Mammary epithelial cell (primary cell): ENCODE measurements at regions of chr3 and their contacts with region 1.

Region 1: DNA sequence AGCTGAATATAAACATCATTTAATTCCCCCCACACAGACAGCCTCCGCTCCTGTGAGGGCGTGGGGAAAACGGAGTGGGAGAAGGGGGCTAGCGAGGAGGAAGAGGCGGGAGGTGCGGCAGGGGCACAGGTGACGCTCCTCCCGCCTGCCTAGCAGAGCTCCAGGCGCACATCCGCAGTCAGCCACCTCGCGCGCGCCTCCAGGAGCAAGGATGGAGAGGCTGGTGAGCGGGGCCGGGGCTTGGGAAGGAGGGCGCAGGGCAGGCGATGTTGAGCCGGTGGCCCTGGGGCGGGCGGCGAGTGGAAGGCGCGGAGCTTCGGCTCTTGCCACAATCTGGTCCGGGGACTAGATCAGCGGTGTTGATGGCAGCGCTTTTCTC is at the start of gene CD200:
- DNase-seq: peak; percentile 63
- H3K4me3 ChIP-seq: peak within 1 kb of the TSS; percentile 63 to 69 (median 67)
- H3K27ac ChIP-seq: peak within 1 kb of the TSS; percentile 6
- H3K4me1 ChIP-seq: peaks cover 2% of the 10 kb centered on the region
- H3K27me3 ChIP-seq: no peaks in the 10 kb centered on the region
- CTCF ChIP-seq: no peak
- total RNA-seq, gene CD200: 13.0 to 23.7 TPM

Region 2: DNA sequence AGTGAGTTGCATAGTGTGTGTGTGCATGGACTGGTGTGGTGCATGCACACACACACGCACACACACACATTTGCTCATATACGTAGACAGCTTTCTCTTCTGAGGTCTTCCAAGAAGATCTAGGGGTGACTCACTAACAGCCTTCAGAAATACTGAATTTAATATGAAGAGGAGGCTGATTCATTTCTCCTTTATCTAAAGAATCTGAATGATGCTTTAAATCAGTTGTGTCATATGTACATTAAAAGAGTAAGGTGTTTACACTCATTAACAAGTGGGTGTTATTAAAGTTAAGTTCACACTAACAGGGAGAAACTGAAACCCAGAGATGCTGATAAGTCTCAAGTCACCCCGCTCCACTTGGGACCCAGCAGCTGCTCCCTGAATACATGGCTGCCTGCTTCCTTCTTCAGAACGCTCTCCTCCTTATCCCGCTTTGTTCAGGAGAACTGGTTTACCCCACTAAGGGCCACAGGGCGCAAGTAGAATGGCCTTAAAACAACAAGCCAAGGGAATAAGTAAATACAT is 276.5 kb before region 1 on chr3:
- CTCF ChIA-PET with region 1: no interaction called
- dilution Hi-C with region 1: no loop called
- in situ Hi-C with region 1: no loop called
- intact Hi-C with region 1: no loop called
- DNase-seq: peak; percentile 69
- H3K4me3 ChIP-seq: no peak overlapping the region
- H3K27ac ChIP-seq: no peak overlapping the region
- H3K4me1 ChIP-seq: no peaks in the 10 kb centered on the region
- H3K27me3 ChIP-seq: no peaks in the 10 kb centered on the region
- CTCF ChIP-seq: no peak

Region 3: GRCh38 chr3:112128843-112129727 is 203.9 kb before region 1 on chr3:
- CTCF ChIA-PET with region 1: no interaction called
- dilution Hi-C with region 1: no loop called
- in situ Hi-C with region 1: no loop called
- intact Hi-C with region 1: no loop called
- DNase-seq: peak; percentile 68
- H3K4me3 ChIP-seq: no peak overlapping the region
- H3K27ac ChIP-seq: peak overlapping the region; percentile 60
- H3K4me1 ChIP-seq: peaks cover 22% of the 10 kb centered on the region
- H3K27me3 ChIP-seq: no peaks in the 10 kb centered on the region
- CTCF ChIP-seq: no peak

Region 4: GRCh38 chr3:112350181-112350825 is 17.3 kb after region 1 on chr3:
- CTCF ChIA-PET with region 1: no interaction called
- dilution Hi-C with region 1: no loop called
- in situ Hi-C with region 1: no loop called
- intact Hi-C with region 1: loop called (anchors 1 kb)
- DNase-seq: no peak
- H3K4me3 ChIP-seq: no peak overlapping the region
- H3K27ac ChIP-seq: no peak overlapping the region
- H3K4me1 ChIP-seq: peaks cover 5% of the 10 kb centered on the region
- H3K27me3 ChIP-seq: no peaks in the 10 kb centered on the region
- CTCF ChIP-seq: no peak

Region 5: GRCh38 chr3:112379020-112379690 is 46.2 kb after region 1 on chr3:
- CTCF ChIA-PET with region 1: no interaction called
- dilution Hi-C with region 1: no loop called
- in situ Hi-C with region 1: no loop called
- intact Hi-C with region 1: loop called (anchors 5 kb)
- DNase-seq: peak; percentile 97
- H3K4me3 ChIP-seq: no peak overlapping the region
- H3K27ac ChIP-seq: peak overlapping the region; percentile 95
- H3K4me1 ChIP-seq: peaks cover 28% of the 10 kb centered on the region
- H3K27me3 ChIP-seq: no peaks in the 10 kb centered on the region
- CTCF ChIP-seq: no peak

Region 6: DNA sequence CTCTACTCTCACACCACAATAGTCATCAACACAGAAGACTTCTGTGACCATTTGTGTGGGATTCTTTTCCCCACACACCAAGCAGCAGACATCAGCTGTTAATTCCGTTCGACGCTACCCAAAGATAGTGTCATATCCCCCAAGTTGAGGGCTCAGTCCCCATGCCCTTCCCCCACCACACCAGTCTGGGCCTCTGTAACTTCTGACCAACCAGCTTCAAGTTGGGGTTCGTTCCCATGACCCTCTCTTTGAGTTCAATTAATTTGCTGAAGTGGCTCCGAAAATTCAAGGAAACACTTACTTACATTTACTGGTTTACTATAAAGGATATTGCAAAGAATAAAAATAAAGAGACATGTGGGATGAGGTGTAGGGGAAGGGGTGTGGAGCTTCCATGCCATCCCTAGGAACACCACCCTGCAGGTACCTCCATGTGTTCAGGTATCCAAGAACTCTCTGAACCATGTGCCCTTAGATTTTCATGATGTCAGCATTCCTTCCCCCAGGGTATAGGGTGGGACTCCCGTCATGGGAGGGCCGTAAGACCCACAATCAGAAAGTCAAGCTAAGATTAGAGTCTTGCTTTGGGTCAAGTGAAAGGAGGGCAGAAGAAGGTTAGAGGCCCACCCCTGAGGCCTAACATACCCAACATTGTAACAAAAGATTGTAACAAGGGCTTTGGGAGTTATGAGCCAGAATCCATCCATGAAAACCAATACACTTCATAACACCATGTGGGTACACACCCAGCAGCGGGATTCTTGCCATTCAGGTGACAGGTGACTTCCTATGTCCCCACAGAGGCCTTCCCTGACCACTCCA is 83.6 kb after region 1 on chr3:
- CTCF ChIA-PET with region 1: no interaction called
- dilution Hi-C with region 1: no loop called
- in situ Hi-C with region 1: no loop called
- intact Hi-C with region 1: loop called (anchors 5 kb)
- DNase-seq: no peak
- H3K4me3 ChIP-seq: no peak overlapping the region
- H3K27ac ChIP-seq: no peak overlapping the region
- H3K4me1 ChIP-seq: no peaks in the 10 kb centered on the region
- H3K27me3 ChIP-seq: no peaks in the 10 kb centered on the region
- CTCF ChIP-seq: no peak